Ovary (tissue), 10 donors: ENCODE measurements at regions of chr11 and their contacts with region 1.

Region 1: GRCh38 chr11:127338380-127339259 is 338.1 kb upstream of the KIRREL3 start:
- DNase-seq: no peak
- H3K4me3 ChIP-seq: no peak overlapping the region
- H3K27ac ChIP-seq: no peak overlapping the region
- H3K4me1 ChIP-seq: no peaks in the 10 kb centered on the region
- H3K27me3 ChIP-seq: no peaks in the 10 kb centered on the region
- CTCF ChIP-seq: no peak
- EP300 ChIP-seq: no peak
- POLR2A ChIP-seq: no peak

Region 2: GRCh38 chr11:126459691-126460281 is 878.8 kb before region 1 on chr11:
- intact Hi-C with region 1: loop called in 1 of 4 experiments (anchors 10 kb)
- DNase-seq: no peak
- H3K4me3 ChIP-seq: no peak overlapping the region
- H3K27ac ChIP-seq: no peak overlapping the region
- H3K4me1 ChIP-seq: no peaks in the 10 kb centered on the region
- H3K27me3 ChIP-seq: no peaks in the 10 kb centered on the region
- CTCF ChIP-seq: no peak
- EP300 ChIP-seq: no peak
- POLR2A ChIP-seq: no peak

Region 3: DNA sequence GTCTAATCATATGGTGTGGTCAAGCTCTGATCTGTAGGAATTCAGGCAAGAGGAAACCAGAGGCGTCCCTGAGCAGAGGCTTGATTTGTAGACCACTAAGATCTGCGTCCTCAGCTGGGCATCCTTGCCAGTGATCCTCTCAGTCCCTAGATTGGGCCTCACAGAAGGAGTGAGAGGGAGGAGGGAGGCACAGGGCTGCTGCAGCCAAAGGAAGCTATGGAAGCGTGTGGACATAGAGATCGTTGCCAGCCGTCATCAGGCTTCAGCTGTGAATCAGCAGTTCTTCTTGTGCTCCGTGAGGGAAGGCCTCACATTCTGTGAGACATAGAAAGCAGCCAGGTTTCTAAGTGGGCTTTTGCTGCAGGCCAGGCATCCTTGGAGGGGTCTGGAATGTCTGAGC is 83.4 kb before region 1 on chr11:
- intact Hi-C with region 1: no loop called
- DNase-seq: no peak
- H3K4me3 ChIP-seq: no peak overlapping the region
- H3K27ac ChIP-seq: no peak overlapping the region
- H3K4me1 ChIP-seq: no peaks in the 10 kb centered on the region
- H3K27me3 ChIP-seq: no peaks in the 10 kb centered on the region
- CTCF ChIP-seq: no peak
- EP300 ChIP-seq: no peak
- POLR2A ChIP-seq: no peak

Region 4: GRCh38 chr11:127288926-127289325 is 49.7 kb before region 1 on chr11:
- intact Hi-C with region 1: no loop called
- DNase-seq: no peak
- H3K4me3 ChIP-seq: no peak overlapping the region
- H3K27ac ChIP-seq: no peak overlapping the region
- H3K4me1 ChIP-seq: no peaks in the 10 kb centered on the region
- H3K27me3 ChIP-seq: no peaks in the 10 kb centered on the region
- CTCF ChIP-seq: no peak
- EP300 ChIP-seq: no peak
- POLR2A ChIP-seq: no peak